ENCODE measurements at regions of chr1 and their contacts with region 1.

Region 1: DNA sequence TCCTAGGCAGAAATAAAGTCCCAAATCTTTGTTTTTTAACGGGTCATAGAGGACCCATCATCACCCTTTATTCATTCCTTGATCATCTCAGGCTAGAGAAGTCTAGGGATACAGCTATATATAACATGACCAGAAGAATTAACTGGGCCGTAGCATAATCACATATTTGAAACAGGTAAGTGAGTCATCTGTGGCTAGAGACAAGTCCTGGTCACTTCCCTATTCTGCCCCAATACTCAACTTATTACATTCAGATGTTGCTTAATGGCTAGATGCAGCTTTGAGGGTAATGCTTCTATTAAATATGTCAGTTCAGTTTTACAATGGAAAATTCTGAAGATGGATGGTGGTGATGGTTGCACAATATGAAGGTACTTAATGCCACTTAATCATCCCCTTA is 47.0 kb downstream of the EXO1 start:
- DNase-seq: no peak
- ATAC-seq: no peak
- H3K4me3 ChIP-seq: no peak overlapping the region
- H3K4me3 Mint-ChIP-seq: no peak overlapping the region
- H3K27ac ChIP-seq: no peak overlapping the region
- H3K27ac Mint-ChIP-seq: no peak overlapping the region
- H3K4me1 ChIP-seq: peaks cover 12 to 15% of the 10 kb centered on the region in 2 donors
- H3K4me1 Mint-ChIP-seq: peaks cover 15% of the 10 kb centered on the region
- H3K27me3 ChIP-seq: no peaks in the 10 kb centered on the region
- H3K27me3 Mint-ChIP-seq: no peaks in the 10 kb centered on the region
- CTCF ChIP-seq: no peak

Region 2: GRCh38 chr1:240732390-240732789 is 1162.6 kb before region 1 on chr1:
- CTCF ChIA-PET with region 1: no interaction called
- POLR2A ChIA-PET with region 1: no interaction called
- intact Hi-C with region 1: loop called (anchors 5 kb)
- DNase-seq: peak; percentile 35
- ATAC-seq: no peak
- H3K4me3 ChIP-seq: no peak overlapping the region
- H3K4me3 Mint-ChIP-seq: no peak overlapping the region
- H3K27ac ChIP-seq: no peak overlapping the region
- H3K27ac Mint-ChIP-seq: no peak overlapping the region
- H3K4me1 ChIP-seq: no peaks in the 10 kb centered on the region
- H3K4me1 Mint-ChIP-seq: no peaks in the 10 kb centered on the region
- H3K27me3 ChIP-seq: no peaks in the 10 kb centered on the region
- H3K27me3 Mint-ChIP-seq: no peaks in the 10 kb centered on the region
- CTCF ChIP-seq: peak; percentile 62

Region 3: GRCh38 chr1:241998412-241998921 is 103.5 kb after region 1 on chr1:
- CTCF ChIA-PET with region 1: interaction called, 68 read pairs
- POLR2A ChIA-PET with region 1: no interaction called
- intact Hi-C with region 1: loop called (anchors 1 kb)
- DNase-seq: peak; percentile 75
- ATAC-seq: peak; percentile 85
- H3K4me3 ChIP-seq: peak overlapping the region; percentile 30 to 70 (median 50)
- H3K4me3 Mint-ChIP-seq: peak overlapping the region; percentile 85
- H3K27ac ChIP-seq: no peak overlapping the region
- H3K27ac Mint-ChIP-seq: no peak overlapping the region
- H3K4me1 ChIP-seq: peaks cover 0 to 7% of the 10 kb centered on the region in 2 donors
- H3K4me1 Mint-ChIP-seq: peaks cover 5% of the 10 kb centered on the region
- H3K27me3 ChIP-seq: peaks cover 0 to 1% (median 0%) of the 10 kb centered on the region in 4 experiments
- H3K27me3 Mint-ChIP-seq: peaks cover 2% of the 10 kb centered on the region
- CTCF ChIP-seq: peak; percentile 77

Region 4: DNA sequence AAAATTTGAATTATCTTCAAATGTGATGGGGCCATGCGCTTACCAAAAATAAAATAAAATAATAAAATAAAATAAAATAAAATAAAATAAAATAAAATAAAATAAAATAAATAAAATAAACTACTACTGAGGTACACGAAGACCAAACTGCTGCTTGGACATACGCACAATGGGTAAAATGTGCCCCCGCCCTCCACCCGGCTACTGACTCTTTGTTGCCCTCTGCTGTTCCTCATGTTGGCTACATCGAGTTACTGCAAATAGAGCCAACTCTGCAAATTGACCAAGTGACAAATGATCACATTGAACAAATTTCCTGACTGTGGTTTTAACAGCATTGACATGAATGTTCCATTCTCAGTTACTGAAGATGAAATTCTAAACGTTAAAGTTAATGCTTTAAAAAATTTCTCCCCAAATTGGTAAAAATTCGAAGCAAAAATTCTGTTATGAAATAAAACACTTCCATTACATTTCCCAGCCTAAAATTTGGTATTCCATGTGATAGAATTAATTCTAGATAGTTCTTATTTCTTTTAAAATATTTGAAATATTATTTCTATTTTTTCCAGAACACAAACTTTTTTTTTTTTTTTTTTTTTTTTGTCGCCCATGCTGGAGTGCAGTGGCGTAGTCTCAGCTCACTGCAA is 122.7 kb after region 1 on chr1:
- CTCF ChIA-PET with region 1: interaction called, 6 read pairs
- POLR2A ChIA-PET with region 1: no interaction called
- intact Hi-C with region 1: loop called (anchors 5 kb)
- DNase-seq: peak; percentile 56
- ATAC-seq: peak; percentile 68
- H3K4me3 ChIP-seq: no peak overlapping the region
- H3K4me3 Mint-ChIP-seq: no peak overlapping the region
- H3K27ac ChIP-seq: no peak overlapping the region
- H3K27ac Mint-ChIP-seq: no peak overlapping the region
- H3K4me1 ChIP-seq: no peaks in the 10 kb centered on the region
- H3K4me1 Mint-ChIP-seq: no peaks in the 10 kb centered on the region
- H3K27me3 ChIP-seq: no peaks in the 10 kb centered on the region
- H3K27me3 Mint-ChIP-seq: no peaks in the 10 kb centered on the region
- CTCF ChIP-seq: peak; percentile 75

Region 5: GRCh38 chr1:242673652-242674051 is 778.6 kb after region 1 on chr1:
- CTCF ChIA-PET with region 1: no interaction called
- POLR2A ChIA-PET with region 1: no interaction called
- intact Hi-C with region 1: no loop called
- DNase-seq: no peak
- ATAC-seq: no peak
- H3K4me3 ChIP-seq: no peak overlapping the region
- H3K4me3 Mint-ChIP-seq: no peak overlapping the region
- H3K27ac ChIP-seq: no peak overlapping the region
- H3K27ac Mint-ChIP-seq: no peak overlapping the region
- H3K4me1 ChIP-seq: no peaks in the 10 kb centered on the region
- H3K4me1 Mint-ChIP-seq: no peaks in the 10 kb centered on the region
- H3K27me3 ChIP-seq: no peaks in the 10 kb centered on the region
- H3K27me3 Mint-ChIP-seq: no peaks in the 10 kb centered on the region
- CTCF ChIP-seq: no peak